ENCODE measurements at regions of chr5 and their contacts with region 1.

Region 1: DNA sequence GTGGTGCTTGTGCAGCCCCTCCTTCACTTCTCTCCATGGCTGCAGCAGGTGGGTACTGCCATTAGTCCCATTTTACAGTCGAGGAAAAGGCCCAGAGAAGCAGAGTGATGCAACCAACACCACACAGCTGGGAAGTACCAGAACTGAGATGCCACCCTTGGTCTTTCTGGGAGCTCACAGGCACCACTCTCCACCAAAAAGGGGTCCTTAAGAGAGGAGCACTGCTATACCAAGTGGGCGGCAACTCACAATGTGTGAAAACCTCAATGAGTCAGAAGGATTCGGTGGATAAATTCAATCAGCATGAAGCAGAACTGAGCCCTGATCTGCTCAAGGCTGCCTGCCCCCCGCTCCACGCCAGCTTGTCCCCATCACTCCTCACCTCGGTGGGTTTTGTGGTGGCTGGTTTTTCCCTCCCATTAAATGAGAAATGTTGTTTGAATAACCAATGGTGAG is 213.7 kb downstream of the FSTL4 start:
- DNase-seq: peak; percentile 73
- H3K4me3 Mint-ChIP-seq: no peak overlapping the region
- H3K27ac Mint-ChIP-seq: no peak overlapping the region
- H3K4me1 Mint-ChIP-seq: peaks cover 37% of the 10 kb centered on the region
- H3K27me3 Mint-ChIP-seq: no peaks in the 10 kb centered on the region

Region 2: DNA sequence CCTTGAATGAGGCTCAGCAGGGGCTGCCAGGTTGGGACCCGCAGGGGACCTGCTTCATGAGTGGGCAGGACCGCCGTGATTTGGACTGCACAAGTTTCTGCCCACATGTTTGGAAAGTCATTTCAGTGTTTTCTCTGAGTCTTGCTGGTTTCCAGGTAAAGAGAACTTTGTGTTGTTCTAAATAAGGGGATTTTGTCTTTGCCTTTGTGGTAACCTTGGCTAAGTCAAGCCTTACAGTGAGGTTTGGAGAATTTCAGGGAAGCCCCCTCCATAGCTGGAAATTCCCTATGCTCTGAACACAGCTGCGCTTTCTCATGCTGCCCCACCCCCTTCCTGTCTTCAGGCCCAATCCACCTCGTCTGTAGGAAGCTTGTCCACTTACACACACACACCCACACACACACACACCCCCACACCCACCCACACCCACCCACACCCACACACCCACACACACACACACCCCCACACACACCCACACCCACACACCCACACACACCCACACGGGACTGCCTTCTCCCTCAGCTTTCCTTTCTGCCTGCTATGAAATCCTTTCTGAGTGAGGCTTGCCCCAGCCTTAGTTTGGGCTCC is 76.7 kb before region 1 on chr5:
- CTCF ChIA-PET with region 1: no interaction called
- intact Hi-C with region 1: loop called (anchors 1 kb)
- DNase-seq: peak; percentile 90
- H3K4me3 Mint-ChIP-seq: no peak overlapping the region
- H3K27ac Mint-ChIP-seq: peak overlapping the region; percentile 68
- H3K4me1 Mint-ChIP-seq: peaks cover 16% of the 10 kb centered on the region
- H3K27me3 Mint-ChIP-seq: no peaks in the 10 kb centered on the region

Region 3: DNA sequence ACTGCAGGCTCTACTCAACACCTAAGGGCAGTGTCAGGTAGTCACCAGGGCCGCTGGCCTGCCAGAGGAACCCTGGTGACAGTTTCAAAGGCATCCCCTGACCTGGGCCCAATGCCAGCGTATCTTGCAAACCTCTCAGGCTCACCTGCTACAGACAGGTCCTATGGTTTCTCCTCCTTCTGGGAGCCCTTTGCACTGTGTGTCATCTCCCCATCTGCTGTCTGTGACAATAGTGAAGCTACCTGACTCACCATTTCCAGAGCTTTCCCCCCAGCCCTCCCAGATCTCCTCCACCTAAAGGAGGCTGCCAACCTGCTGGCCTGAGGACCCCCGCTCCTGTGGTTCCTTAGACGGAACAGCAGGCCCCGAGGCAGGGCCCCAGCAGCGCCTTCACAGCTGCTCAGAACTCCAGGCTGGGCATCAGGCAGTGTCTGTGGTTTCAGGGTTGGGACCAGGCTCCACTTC is 10.6 kb after region 1 on chr5:
- CTCF ChIA-PET with region 1: no interaction called
- intact Hi-C with region 1: no loop called
- DNase-seq: no peak
- H3K4me3 Mint-ChIP-seq: no peak overlapping the region
- H3K27ac Mint-ChIP-seq: no peak overlapping the region
- H3K4me1 Mint-ChIP-seq: no peaks in the 10 kb centered on the region
- H3K27me3 Mint-ChIP-seq: peaks cover 3% of the 10 kb centered on the region

Region 4: GRCh38 chr5:133423618-133424282 is 25.1 kb after region 1 on chr5:
- CTCF ChIA-PET with region 1: interaction called, 8 read pairs
- intact Hi-C with region 1: loop called (anchors 1 kb)
- DNase-seq: peak; percentile 79
- H3K4me3 Mint-ChIP-seq: no peak overlapping the region
- H3K27ac Mint-ChIP-seq: no peak overlapping the region
- H3K4me1 Mint-ChIP-seq: peaks cover 10% of the 10 kb centered on the region
- H3K27me3 Mint-ChIP-seq: no peaks in the 10 kb centered on the region

Region 5: DNA sequence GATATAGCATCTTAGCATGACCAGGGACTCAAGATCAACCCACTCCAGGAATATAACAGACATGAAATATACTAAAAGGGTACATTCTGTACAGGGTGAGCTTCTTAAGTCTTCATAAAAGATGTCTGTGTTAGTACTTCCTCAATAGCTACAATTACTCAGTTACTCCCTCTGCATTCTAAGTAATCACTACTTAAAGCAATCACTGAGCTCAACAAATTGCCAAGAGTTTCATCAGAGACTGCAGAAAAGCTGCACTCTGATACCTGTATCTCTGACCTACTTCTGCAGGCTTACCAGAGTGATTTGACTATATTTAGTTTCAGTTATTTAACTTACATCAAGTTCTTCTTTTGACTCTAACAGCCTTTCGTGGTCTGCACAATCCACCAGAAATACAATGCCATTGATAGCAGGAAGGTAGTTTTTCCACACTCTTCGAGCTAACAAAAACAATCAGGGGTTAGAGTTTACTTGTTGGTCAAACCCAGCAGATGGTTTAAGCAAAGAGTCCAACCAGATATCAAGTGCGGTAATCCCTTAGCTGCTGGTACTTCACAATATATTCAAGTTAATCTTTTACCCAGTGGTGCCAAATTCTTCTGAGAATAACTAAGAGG is 1210.7 kb after region 1 on chr5:
- CTCF ChIA-PET with region 1: no interaction called
- intact Hi-C with region 1: loop called (anchors 10 kb)
- DNase-seq: no peak
- H3K4me3 Mint-ChIP-seq: peak overlapping the region; percentile 17
- H3K27ac Mint-ChIP-seq: peak overlapping the region; percentile 87
- H3K4me1 Mint-ChIP-seq: peaks cover 37% of the 10 kb centered on the region
- H3K27me3 Mint-ChIP-seq: no peaks in the 10 kb centered on the region

Measured in activated naive CD4-positive, alpha-beta T cell treated with anti-CD3 and anti-CD28 coated beads for 36 hours (primary cell).